ENCODE measurements at regions of chr1 and their contacts with region 1.

Region 1: GRCh38 chr1:39738622-39739366 is at the start of gene PPIE:
- H3K4me3 ChIP-seq: peak within 1 kb of the TSS; percentile 93
- H3K27ac ChIP-seq: peak within 1 kb of the TSS; percentile 56; the same call in 1 of the 2 replicates
- H3K4me1 ChIP-seq: peaks cover 2% of the 10 kb centered on the region; the same call in 1 of the 2 replicates
- CTCF ChIP-seq: no peak

Region 2: DNA sequence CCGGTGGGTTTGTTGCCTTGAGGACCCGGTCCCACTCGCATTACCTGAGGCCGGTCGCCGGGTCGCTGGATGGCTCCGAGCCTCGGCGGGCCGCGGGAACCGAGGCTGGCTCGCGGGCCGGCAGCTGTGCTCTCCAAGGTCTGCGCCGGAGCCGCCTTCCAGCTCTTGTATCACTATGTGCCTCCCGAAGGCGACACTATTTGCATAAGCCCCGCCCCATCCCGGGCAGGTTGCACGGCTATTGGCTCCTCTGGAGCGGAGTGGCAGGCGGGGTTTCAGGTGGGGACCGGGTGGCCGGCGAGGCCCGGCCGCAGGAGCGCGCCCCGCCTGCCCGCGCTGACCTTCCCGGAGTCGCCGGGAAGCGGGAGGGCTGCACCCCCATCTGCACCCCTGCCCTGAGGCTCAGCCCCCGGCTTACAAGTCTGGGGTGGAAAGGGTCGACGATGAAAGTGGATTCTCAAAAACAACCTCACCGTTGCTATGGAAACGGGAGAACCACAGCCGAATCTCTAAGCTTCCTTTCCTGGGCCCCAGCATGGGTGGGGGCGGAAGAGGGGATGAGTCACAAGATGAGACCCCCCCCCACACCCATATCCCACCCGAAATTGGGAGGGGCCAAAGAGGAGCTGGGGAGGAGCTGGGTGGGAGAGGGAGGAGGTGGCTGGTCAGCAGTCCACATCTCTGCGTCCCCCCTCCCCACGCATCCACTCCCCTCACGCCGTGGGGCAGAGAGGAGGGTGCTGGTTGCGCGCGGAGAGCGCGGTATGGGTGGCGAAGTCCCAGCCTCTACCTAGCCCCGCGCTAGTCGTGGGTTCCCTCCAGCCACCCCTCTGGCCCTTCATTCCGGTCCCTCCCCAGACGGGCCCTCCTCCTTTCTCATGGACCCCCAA is 47.3 kb before region 1 on chr1 and contains the start of gene HPCAL4:
- CTCF ChIA-PET with region 1: no interaction called
- POLR2A ChIA-PET with region 1: interaction called, 12 read pairs
- H3K4me3 ChIP-seq: peak within 1 kb of the TSS; percentile 25
- H3K27ac ChIP-seq: no peak within 1 kb of the TSS
- H3K4me1 ChIP-seq: no peaks in the 10 kb centered on the region
- CTCF ChIP-seq: 0 out of 2 replicates have a peak, but pooled peaks have one; percentile 4

Region 3: DNA sequence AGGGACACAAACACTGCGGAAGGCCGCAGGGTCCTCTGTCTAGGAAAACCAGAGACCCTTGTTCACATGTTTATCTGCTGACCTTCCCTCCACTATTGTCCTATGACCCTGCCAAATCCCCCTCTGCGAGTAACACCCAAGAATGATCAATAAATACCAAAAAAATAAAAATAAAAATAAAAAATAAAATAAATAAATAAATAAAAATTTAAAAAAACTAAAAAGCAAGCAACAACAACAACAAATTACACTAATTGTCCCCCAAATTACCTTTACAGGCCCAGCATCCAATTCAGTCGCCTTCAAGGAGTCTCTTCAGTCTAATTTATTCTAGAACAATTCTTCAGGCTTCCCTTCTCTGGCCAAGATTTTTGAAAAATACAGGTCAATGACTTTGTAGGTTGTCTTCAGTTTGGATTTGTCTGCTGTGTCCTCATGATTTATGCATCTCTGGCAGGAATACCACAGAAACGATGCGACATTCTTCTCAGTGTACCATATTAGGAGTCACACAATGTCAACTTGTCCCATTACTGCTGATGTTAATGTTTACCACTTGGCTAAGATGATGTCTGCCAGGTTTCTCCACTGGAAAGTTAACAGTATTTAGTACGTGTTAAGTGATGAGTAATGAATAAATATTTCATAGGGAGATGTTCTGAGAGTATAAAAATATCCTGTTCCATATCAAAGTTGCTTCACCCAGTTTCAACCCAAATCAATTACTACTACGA is 70.2 kb after region 1 on chr1:
- CTCF ChIA-PET with region 1: no interaction called
- POLR2A ChIA-PET with region 1: no interaction called
- H3K4me3 ChIP-seq: no peak overlapping the region
- H3K27ac ChIP-seq: no peak overlapping the region
- H3K4me1 ChIP-seq: no peaks in the 10 kb centered on the region
- CTCF ChIP-seq: no peak

Measured in HEK293 (cell line).